Heart right ventricle (tissue), 16 donors: ENCODE measurements at regions of chr9 and their contacts with region 1.

Region 1: GRCh38 chr9:105425841-105426436 is 21.9 kb upstream of the FSD1L start:
- DNase-seq: no peak
- ATAC-seq: peak in 4 of 8 donors; percentile 55 to 64 (median 58)
- H3K4me3 ChIP-seq: no peak overlapping the region
- H3K27ac ChIP-seq: no peak overlapping the region
- H3K4me1 ChIP-seq: no peaks in the 10 kb centered on the region
- H3K27me3 ChIP-seq: no peaks in the 10 kb centered on the region
- CTCF ChIP-seq: peak in 7 of 9 donors; percentile 48 to 68 (median 56)

Region 2: GRCh38 chr9:105457560-105458294 is 31.8 kb after region 1 on chr9:
- intact Hi-C with region 1: loop called in 1 of 10 experiments (anchors 5 kb)
- DNase-seq: peak; percentile 48 to 65
- ATAC-seq: peak; percentile 73 to 91 (median 86)
- H3K4me3 ChIP-seq: peak overlapping the region in 8 of 10 donors; percentile 14 to 39 (median 26)
- H3K27ac ChIP-seq: peak overlapping the region in 9 of 10 donors; percentile 13 to 83 (median 58)
- H3K4me1 ChIP-seq: peaks cover 0 to 62% (median 18%) of the 10 kb centered on the region in 9 donors
- H3K27me3 ChIP-seq: no peaks in the 10 kb centered on the region
- CTCF ChIP-seq: no peak

Region 3: DNA sequence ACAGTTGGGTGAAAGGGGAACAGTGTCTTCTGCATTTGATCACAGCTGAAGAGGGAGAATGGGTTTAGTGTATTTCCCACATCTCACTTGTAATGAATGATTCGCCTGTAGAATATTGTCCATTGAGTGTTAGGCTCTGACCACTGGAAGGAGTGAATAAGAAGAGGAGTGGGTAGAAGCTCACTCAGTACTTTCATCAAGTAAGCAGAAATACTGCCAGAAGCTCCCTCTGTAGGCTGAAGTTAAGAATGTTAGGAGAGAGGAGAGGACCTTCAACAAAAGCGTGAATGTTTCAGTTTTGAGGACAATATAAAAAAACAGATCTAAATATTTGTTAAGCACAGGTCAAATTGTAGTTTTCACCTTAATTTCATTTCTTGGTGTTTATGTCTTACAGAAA is 49.4 kb after region 1 on chr9:
- intact Hi-C with region 1: loop called in 8 of 10 experiments (anchors 5 to 10 kb)
- DNase-seq: no peak
- ATAC-seq: peak in 3 of 8 donors; percentile 20 to 57 (median 56)
- H3K4me3 ChIP-seq: no peak overlapping the region
- H3K27ac ChIP-seq: no peak overlapping the region
- H3K4me1 ChIP-seq: peaks cover 0 to 4% (median 0%) of the 10 kb centered on the region in 9 donors
- H3K27me3 ChIP-seq: no peaks in the 10 kb centered on the region
- CTCF ChIP-seq: peak in 7 of 9 donors; percentile 18 to 61 (median 44)